ENCODE measurements at regions of chr11 and their contacts with region 1.

Region 1: DNA sequence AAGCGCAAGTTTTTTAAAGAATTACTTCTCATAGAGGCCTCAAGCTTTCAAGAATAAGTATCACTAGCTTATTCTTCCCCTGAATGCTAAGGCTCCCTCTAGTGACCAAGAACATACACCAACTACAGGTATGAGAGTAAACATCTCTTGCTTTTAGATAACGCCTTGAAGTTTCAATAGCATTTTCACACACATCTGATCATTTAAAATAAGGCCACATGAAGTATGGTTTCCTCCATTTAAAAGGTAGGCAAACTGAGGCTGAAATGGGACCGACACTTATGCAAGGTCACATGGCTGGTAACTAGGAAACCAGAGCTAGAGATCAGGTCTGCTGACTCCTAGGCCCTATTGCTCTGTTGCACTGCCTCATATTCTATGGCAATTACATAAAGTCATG is 66.5 kb downstream of the CCDC34 start:
- DNase-seq: peak; percentile 52
- H3K27ac ChIP-seq: no peak overlapping the region
- CTCF ChIP-seq: peak; percentile 75

Region 2: GRCh38 chr11:27183672-27184457 is 112.6 kb before region 1 on chr11:
- CTCF ChIA-PET with region 1: interaction called, 33 read pairs
- POLR2A ChIA-PET with region 1: no interaction called
- DNase-seq: peak; percentile 38
- H3K27ac ChIP-seq: no peak overlapping the region
- CTCF ChIP-seq: peak; percentile 74

Region 3: DNA sequence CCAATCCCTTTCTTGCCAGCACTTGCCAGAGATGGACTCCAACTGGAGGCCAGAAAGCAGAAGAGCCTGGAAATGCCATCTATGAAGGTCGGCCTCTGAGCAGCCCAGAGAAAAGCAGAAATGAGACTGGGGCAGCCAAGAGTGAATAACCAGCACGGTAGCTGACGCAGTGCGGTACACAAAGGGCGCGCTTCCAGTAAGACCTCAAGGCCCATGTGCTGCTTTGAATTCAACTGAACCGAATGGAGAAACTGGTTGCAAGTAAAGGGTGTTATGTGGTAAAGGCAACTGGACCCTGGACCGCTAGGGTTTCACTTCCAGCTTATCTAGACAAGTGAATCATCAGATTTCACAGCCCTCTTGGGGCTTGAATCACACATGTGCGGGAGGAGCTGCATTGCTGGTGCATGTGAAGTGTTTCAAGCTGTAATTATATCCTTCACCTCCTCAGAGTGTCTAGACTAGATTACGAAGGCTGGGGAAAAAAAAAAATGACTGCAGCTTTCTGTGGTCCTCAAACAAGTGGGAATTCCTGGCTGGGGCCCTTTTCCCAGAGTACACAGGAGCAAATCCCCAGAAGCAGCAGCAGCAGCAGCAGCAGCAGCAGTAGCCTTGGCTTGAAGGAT is 62.3 kb before region 1 on chr11:
- CTCF ChIA-PET with region 1: no interaction called
- POLR2A ChIA-PET with region 1: no interaction called
- DNase-seq: peak; percentile 25
- H3K27ac ChIP-seq: peak overlapping the region; percentile 12; the same call in 1 of the 2 replicates
- CTCF ChIP-seq: no peak

Region 4: GRCh38 chr11:27437829-27438594 is 141.5 kb after region 1 on chr11:
- CTCF ChIA-PET with region 1: no interaction called
- POLR2A ChIA-PET with region 1: no interaction called
- DNase-seq: no peak
- H3K27ac ChIP-seq: no peak overlapping the region
- CTCF ChIP-seq: no peak